Mucosa of descending colon (tissue), 3 donors: ENCODE measurements at regions of chr1 and their contacts with region 1.

Region 1: DNA sequence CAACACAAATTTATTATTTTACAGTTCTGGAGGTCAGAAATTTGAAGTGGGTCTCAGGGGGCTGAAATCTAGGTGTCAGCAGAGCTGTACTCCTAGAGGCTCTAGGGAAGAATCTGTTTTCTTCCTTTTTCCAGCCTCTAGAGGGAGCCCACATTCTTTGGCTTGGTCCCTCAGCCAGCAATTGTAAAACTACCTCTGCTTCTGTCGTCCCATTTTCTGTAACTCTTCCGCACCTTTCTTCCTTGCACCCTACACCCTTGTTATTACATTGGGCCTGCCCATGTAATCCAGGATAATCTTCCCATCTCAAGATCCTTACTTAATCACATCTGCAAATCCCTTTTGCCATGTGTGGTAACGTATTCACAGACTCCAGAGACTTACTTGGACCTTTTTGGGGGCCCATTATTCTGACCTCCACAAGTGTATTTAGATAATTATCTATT is 24.8 kb upstream of the THEM4 start:
- DNase-seq: peak in 1 of 3 donors; percentile 75
- ATAC-seq: peak; percentile 85
- H3K4me3 ChIP-seq: no peak overlapping the region
- H3K4me1 ChIP-seq: no peaks in the 10 kb centered on the region
- CTCF ChIP-seq: peak; percentile 44

Region 2: GRCh38 chr1:151984313-151984956 is 50.4 kb after region 1 on chr1:
- intact Hi-C with region 1: no loop called
- DNase-seq: no peak
- ATAC-seq: no peak
- H3K4me3 ChIP-seq: no peak overlapping the region
- H3K4me1 ChIP-seq: peaks cover 67% of the 10 kb centered on the region
- CTCF ChIP-seq: no peak

Region 3: GRCh38 chr1:152001391-152002249 is 67.5 kb after region 1 on chr1:
- intact Hi-C with region 1: loop called (anchors 2 to 5 kb)
- DNase-seq: peak; percentile 81 to 97 (median 88)
- ATAC-seq: peak; percentile 83
- H3K4me3 ChIP-seq: no peak overlapping the region
- H3K4me1 ChIP-seq: peaks cover 13% of the 10 kb centered on the region
- CTCF ChIP-seq: peak; percentile 87